Activated CD4-positive, alpha-beta T cell treated with anti-CD3 and anti-CD28 coated beads, Interleukin-2, amount 10 ng/mL, durations not matched to agents 24 days and 14 days (primary cell): ENCODE measurements at regions of chr14 and their contacts with region 1.

Region 1: GRCh38 chr14:75542588-75543091 is 20.4 kb downstream of the BATF start:
- DNase-seq: peak; percentile 94
- H3K4me3 Mint-ChIP-seq: peak overlapping the region; percentile 67
- H3K27ac Mint-ChIP-seq: peak overlapping the region; percentile 96
- H3K4me1 Mint-ChIP-seq: peaks cover 70% of the 10 kb centered on the region
- H3K27me3 Mint-ChIP-seq: no peaks in the 10 kb centered on the region

Region 2: GRCh38 chr14:74647678-74648461 is 894.8 kb before region 1 on chr14:
- intact Hi-C with region 1: no loop called
- DNase-seq: no peak
- H3K4me3 Mint-ChIP-seq: no peak overlapping the region
- H3K27ac Mint-ChIP-seq: no peak overlapping the region
- H3K4me1 Mint-ChIP-seq: peaks cover 3% of the 10 kb centered on the region
- H3K27me3 Mint-ChIP-seq: peaks cover 5% of the 10 kb centered on the region

Region 3: GRCh38 chr14:74804219-74804826 is 738.3 kb before region 1 on chr14:
- intact Hi-C with region 1: no loop called
- DNase-seq: peak; percentile 77
- H3K4me3 Mint-ChIP-seq: no peak overlapping the region
- H3K27ac Mint-ChIP-seq: no peak overlapping the region
- H3K4me1 Mint-ChIP-seq: no peaks in the 10 kb centered on the region
- H3K27me3 Mint-ChIP-seq: no peaks in the 10 kb centered on the region

Region 4: DNA sequence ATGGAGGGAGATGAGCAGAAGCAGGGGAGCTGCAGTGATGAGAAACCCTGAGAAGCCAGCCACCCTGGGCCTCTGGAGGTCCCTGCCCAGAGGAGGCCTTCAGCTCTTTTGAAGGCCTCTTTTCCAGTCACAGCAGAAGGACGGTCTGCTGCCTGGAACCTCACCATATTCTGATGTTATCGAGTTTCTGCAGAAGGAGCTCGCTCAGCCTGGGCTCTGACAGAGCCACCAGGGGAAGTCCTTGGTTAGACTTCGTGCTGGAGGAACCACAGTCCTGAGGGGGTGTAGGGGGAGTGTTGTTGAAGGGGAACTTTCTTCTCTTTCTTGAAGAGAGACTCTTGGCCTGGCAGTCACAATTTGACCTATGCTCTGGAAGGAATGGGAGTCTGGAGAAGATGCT is 45.4 kb before region 1 on chr14:
- intact Hi-C with region 1: loop called (anchors 1 kb)
- DNase-seq: peak; percentile 84
- H3K4me3 Mint-ChIP-seq: peak overlapping the region; percentile 76
- H3K27ac Mint-ChIP-seq: peak overlapping the region; percentile 90
- H3K4me1 Mint-ChIP-seq: peaks cover 48% of the 10 kb centered on the region
- H3K27me3 Mint-ChIP-seq: no peaks in the 10 kb centered on the region

Region 5: GRCh38 chr14:75560962-75561432 is 18.4 kb after region 1 on chr14:
- intact Hi-C with region 1: loop called (anchors 1 kb)
- DNase-seq: peak; percentile 84
- H3K4me3 Mint-ChIP-seq: peak overlapping the region; percentile 63
- H3K27ac Mint-ChIP-seq: peak overlapping the region; percentile 98
- H3K4me1 Mint-ChIP-seq: peaks cover 61% of the 10 kb centered on the region
- H3K27me3 Mint-ChIP-seq: no peaks in the 10 kb centered on the region

Region 6: GRCh38 chr14:75566321-75566720 is 23.7 kb after region 1 on chr14:
- intact Hi-C with region 1: loop called (anchors 1 kb)
- DNase-seq: peak; percentile 90
- H3K4me3 Mint-ChIP-seq: peak overlapping the region; percentile 50
- H3K27ac Mint-ChIP-seq: peak overlapping the region; percentile 89
- H3K4me1 Mint-ChIP-seq: peaks cover 53% of the 10 kb centered on the region
- H3K27me3 Mint-ChIP-seq: no peaks in the 10 kb centered on the region

Region 7: DNA sequence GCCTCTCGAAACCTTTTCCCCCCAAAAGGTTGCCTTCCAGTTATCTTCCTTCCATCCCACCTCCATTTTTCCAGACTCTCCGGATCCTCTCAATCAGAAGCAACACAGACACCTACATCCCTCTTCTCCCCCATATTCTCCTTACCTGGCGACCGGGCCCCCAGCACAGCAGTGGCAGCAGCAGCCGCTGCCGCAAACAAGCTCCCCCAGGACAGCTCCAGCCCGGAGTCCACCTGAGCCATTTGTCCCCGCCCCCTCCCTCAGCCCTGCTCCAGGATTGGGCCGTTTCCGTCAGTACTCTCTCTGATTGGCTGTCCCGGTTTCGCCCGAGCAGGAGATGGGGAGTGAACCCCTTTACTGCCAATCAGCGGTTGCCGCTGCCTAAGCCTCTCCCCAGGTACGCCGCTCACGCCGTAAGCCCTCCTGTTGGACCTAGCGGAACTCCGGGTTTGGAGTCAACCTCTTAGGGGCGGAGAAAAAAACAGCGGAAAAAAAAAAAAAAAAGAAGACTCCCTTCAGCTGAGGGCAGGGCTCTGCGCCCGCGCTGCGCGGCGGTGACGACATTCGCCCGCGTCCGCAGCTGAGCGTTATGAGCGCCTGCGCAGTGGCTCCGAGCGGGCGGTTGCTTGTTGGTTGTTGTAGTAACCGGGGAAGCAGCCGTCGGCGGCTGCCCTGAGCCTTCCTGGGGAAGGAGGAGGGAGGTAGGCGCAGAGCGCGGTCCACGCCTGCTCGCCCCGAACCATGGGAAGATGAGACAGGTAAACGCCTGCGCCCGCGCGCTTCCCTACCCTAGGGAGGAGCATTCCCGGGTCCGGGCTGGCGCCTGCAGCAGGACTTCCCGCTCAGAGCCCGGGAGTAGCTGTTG is 118.2 kb after region 1 on chr14 and contains the starts of genes ERG28 and TTLL5:
- intact Hi-C with region 1: loop called (anchors 1 kb)
- DNase-seq: peak; percentile 99
- H3K4me3 Mint-ChIP-seq: peak within 1 kb of the TSS; percentile 95
- H3K27ac Mint-ChIP-seq: peak within 1 kb of the TSS; percentile 92
- H3K4me1 Mint-ChIP-seq: peaks cover 21% of the 10 kb centered on the region
- H3K27me3 Mint-ChIP-seq: no peaks in the 10 kb centered on the region
- total RNA-seq, gene ERG28: 20.3 and 20.6 TPM in 2 replicates
- total RNA-seq, gene TTLL5: 31.7 and 35.5 TPM in 2 replicates